ENCODE measurements at regions of chr13 and their contacts with region 1.

Region 1: DNA sequence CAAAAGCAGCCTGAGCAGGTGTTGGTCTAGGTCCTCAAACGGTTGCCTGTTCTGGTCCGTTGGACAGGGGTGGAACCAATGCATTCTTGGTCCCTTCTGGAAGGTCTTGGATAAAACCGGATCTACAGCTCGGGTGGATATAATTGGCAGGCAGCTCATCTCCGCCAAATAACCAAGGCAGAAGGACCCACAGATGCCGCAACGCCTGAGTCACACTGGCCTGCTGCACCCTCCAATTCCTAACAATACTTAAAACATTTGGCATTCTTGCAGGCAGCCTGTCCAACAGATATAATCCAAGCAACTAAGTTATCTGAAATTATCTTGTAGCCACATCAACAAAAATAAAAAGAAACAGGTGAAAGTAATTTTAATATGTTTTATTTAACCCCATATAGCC is 59.0 kb upstream of the FGF14 start:
- DNase-seq: no peak
- H3K4me3 ChIP-seq: no peak overlapping the region
- H3K27ac ChIP-seq: no peak overlapping the region
- H3K4me1 ChIP-seq: no peaks in the 10 kb centered on the region
- CTCF ChIP-seq: no peak

Region 2: DNA sequence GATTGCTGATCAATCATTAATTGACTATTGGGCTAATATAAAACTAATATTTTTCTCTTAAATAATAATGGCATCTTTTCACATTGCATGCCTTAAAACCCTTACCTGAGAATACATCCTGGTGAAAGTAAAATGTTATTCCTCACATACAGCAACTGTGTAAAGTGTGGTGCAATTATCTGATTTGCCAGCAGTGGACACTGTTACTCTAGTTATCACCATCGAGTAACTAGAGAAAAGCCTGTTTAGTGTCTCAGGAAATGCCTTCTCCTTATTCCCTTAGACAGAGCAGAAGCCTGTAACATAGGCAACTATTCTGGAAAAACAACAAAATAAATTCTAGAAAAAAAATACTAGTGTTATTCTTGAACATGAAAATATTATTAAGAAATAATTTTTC is 518.8 kb before region 1 on chr13:
- CTCF ChIA-PET with region 1: no interaction called
- POLR2A ChIA-PET with region 1: no interaction called
- intact Hi-C with region 1: loop called (anchors 5 kb)
- DNase-seq: peak; percentile 4
- H3K4me3 ChIP-seq: no peak overlapping the region
- H3K27ac ChIP-seq: no peak overlapping the region
- H3K4me1 ChIP-seq: no peaks in the 10 kb centered on the region
- CTCF ChIP-seq: peak; percentile 67

Region 3: GRCh38 chr13:102141625-102142472 is 319.0 kb before region 1 on chr13:
- CTCF ChIA-PET with region 1: no interaction called
- POLR2A ChIA-PET with region 1: no interaction called
- intact Hi-C with region 1: loop called (anchors 2 kb)
- DNase-seq: peak; percentile 1
- H3K4me3 ChIP-seq: no peak overlapping the region
- H3K27ac ChIP-seq: no peak overlapping the region
- H3K4me1 ChIP-seq: no peaks in the 10 kb centered on the region
- CTCF ChIP-seq: peak; percentile 74

Region 4: GRCh38 chr13:102197193-102197592 is 263.6 kb before region 1 on chr13:
- CTCF ChIA-PET with region 1: no interaction called
- POLR2A ChIA-PET with region 1: no interaction called
- intact Hi-C with region 1: loop called (anchors 5 kb)
- DNase-seq: no peak
- H3K4me3 ChIP-seq: no peak overlapping the region
- H3K27ac ChIP-seq: no peak overlapping the region
- H3K4me1 ChIP-seq: no peaks in the 10 kb centered on the region
- CTCF ChIP-seq: 0 out of 2 replicates have a peak, but pooled peaks have one; percentile 20

Region 5: DNA sequence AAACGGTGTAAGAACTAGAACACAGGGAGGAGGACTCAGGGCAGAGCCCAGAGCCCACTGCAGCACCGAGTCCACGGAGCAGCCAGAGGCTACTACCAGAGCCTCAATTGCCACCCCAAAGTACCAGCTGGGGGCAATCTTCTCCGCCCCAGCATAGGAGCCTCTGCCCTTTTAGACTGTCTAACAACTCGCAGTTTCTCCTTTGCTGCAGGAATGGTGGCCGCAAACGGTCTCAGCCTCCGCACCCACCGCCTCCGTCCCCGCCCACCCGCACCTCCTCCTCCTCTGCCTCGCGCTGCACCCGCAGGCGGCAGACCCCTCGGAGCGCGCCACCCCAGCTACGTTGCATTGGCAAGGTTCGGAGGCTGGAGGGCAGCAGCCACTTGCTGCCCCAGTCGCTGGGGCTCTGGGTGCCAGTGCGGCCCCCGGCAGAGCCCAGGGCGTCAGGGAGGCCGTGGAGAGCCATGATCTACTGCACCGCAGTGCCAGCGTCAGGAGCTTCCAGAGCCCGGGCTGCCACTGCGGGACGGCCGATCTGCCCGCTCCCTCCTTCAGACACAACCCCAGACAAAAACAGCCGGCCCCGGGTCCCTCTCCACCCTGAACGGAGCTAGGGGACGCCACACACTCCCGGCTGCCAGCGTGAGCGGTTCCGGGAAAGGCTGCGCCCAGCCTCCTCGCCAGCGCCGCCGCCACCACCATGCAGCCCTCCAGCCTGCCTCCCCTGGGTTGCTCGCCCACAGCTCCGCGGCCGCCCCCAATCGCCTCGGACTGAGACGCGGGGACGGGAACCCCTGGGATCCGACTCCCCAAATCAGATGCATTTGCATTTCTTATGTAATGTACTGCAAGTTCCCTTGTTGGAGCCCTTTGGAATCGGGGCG is 60.8 kb before region 1 on chr13:
- CTCF ChIA-PET with region 1: no interaction called
- POLR2A ChIA-PET with region 1: no interaction called
- intact Hi-C with region 1: loop called (anchors 2 kb)
- DNase-seq: no peak
- H3K4me3 ChIP-seq: no peak overlapping the region
- H3K27ac ChIP-seq: no peak overlapping the region
- H3K4me1 ChIP-seq: no peaks in the 10 kb centered on the region
- CTCF ChIP-seq: no peak